ENCODE measurements at regions of chr16 and their contacts with region 1.

Region 1: DNA sequence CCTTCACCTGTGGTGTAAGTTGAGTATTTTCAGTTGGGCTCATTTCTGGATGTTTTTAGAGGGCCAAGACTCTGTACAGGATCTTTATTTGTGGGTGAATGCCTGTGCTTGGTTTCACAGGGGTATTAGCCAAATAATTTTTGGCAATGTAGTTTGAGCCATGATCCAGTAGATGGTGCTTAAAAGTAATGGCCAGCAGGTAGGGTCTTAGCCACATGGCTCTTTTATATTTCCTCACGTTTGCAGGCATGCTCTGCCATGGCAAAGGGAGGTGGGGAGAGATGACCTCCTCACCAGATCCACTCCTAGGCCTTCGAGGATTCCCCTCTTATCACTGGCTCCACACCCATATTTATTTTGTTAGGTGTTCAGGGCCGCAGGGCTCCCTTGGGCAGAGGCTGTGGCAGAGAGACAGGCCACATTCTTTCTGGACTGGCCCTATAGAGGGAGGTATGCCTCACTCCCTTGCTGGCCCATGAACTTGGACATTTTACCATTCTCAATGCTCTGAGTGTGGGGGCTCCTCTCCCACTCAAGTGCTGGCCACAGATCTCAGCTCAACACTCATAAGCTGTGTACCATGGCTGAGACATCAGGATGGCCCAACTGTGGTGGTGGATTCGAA is 417.1 kb downstream of the XYLT1 start:
- DNase-seq: no peak
- ATAC-seq: peak; percentile 30; the same call in 1 of the 2 replicates
- H3K4me3 ChIP-seq: no peak overlapping the region
- H3K27ac ChIP-seq: no peak overlapping the region
- H3K4me1 ChIP-seq: no peaks in the 10 kb centered on the region
- H3K27me3 ChIP-seq: peaks cover 8% of the 10 kb centered on the region
- CTCF ChIP-seq: peak in 2 of 3 experiments; percentile 6 to 10; a peak in 1 of 6 replicates
- POLR2A ChIP-seq: no peak
- RAD21 ChIP-seq: peak; percentile 17; the same call in 1 of the 2 replicates

Region 2: GRCh38 chr16:17002565-17002964 is 51.1 kb before region 1 on chr16:
- CTCF ChIA-PET with region 1: no interaction called
- POLR2A ChIA-PET with region 1: no interaction called
- RAD21 ChIA-PET with region 1: no interaction called
- intact Hi-C with region 1: loop called (anchors 5 kb)
- DNase-seq: no peak
- ATAC-seq: no peak
- H3K4me3 ChIP-seq: no peak overlapping the region
- H3K27ac ChIP-seq: no peak overlapping the region
- H3K4me1 ChIP-seq: no peaks in the 10 kb centered on the region
- H3K27me3 ChIP-seq: 0 out of 2 replicates have a peak, but pooled peaks cover 3% of the 10 kb centered on the region
- CTCF ChIP-seq: no peak
- POLR2A ChIP-seq: no peak
- RAD21 ChIP-seq: no peak